CD4-positive, alpha-beta T cell (primary cell): ENCODE measurements at regions of chr12 and their contacts with region 1.

Region 1: DNA sequence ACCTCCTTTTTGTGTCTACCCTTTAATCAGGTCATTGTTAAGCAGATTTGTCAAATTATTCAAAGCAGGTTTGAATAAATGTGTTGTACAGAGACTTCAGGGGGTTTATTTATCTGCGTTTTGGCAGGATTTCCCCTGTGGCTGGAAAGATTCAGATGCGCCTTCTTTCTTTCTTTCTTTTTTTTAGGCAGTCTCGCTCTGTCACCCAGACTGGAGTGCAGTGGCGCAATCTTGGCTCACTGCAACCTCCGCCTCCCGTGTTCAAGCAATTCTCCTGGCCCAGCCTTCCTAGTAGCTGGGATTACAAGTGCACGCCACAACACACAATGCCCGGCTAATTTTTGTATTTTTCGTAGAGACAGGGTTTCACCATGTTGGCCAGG is 6.3 kb upstream of the NANOGNB start:
- DNase-seq: no peak
- ATAC-seq: no peak
- H3K4me3 ChIP-seq: no peak overlapping the region
- H3K4me3 Mint-ChIP-seq: no peak overlapping the region
- H3K27ac ChIP-seq: no peak overlapping the region
- H3K27ac Mint-ChIP-seq: no peak overlapping the region
- H3K4me1 ChIP-seq: peaks cover 8% of the 10 kb centered on the region
- H3K4me1 Mint-ChIP-seq: no peaks in the 10 kb centered on the region
- H3K27me3 ChIP-seq: no peaks in the 10 kb centered on the region
- H3K27me3 Mint-ChIP-seq: no peaks in the 10 kb centered on the region
- CTCF ChIP-seq: no peak

Region 2: GRCh38 chr12:7781283-7781682 is 22.5 kb after region 1 on chr12:
- CTCF ChIA-PET with region 1: no interaction called
- POLR2A ChIA-PET with region 1: no interaction called
- intact Hi-C with region 1: loop called in 1 of 2 experiments (anchors 1 kb)
- DNase-seq: no peak
- ATAC-seq: no peak
- H3K4me3 ChIP-seq: no peak overlapping the region
- H3K4me3 Mint-ChIP-seq: no peak overlapping the region
- H3K27ac ChIP-seq: no peak overlapping the region
- H3K27ac Mint-ChIP-seq: no peak overlapping the region
- H3K4me1 ChIP-seq: no peaks in the 10 kb centered on the region
- H3K4me1 Mint-ChIP-seq: no peaks in the 10 kb centered on the region
- H3K27me3 ChIP-seq: no peaks in the 10 kb centered on the region
- H3K27me3 Mint-ChIP-seq: peaks cover 4% of the 10 kb centered on the region
- CTCF ChIP-seq: no peak

Region 3: GRCh38 chr12:7915559-7916403 is 157.0 kb after region 1 on chr12:
- CTCF ChIA-PET with region 1: no interaction called
- POLR2A ChIA-PET with region 1: no interaction called
- intact Hi-C with region 1: no loop called
- DNase-seq: peak in 2 of 14 experiments; percentile 43 to 49
- ATAC-seq: no peak
- H3K4me3 ChIP-seq: no peak overlapping the region
- H3K4me3 Mint-ChIP-seq: no peak overlapping the region
- H3K27ac ChIP-seq: no peak overlapping the region
- H3K27ac Mint-ChIP-seq: peak overlapping the region; percentile 44
- H3K4me1 ChIP-seq: peaks cover 5% of the 10 kb centered on the region
- H3K4me1 Mint-ChIP-seq: peaks cover 37% of the 10 kb centered on the region
- H3K27me3 ChIP-seq: no peaks in the 10 kb centered on the region
- H3K27me3 Mint-ChIP-seq: no peaks in the 10 kb centered on the region
- CTCF ChIP-seq: no peak